ENCODE measurements at regions of chr5 and their contacts with region 1.

Region 1: GRCh38 chr5:179806250-179807222 is at the start of gene MGAT4B:
- DNase-seq: peak in 1 of 2 experiments; percentile 83
- H3K4me3 ChIP-seq: peak within 1 kb of the TSS; percentile 98
- H3K27ac ChIP-seq: peak within 1 kb of the TSS; percentile 53
- H3K4me1 ChIP-seq: peaks cover 40% of the 10 kb centered on the region
- H3K27me3 ChIP-seq: no peaks in the 10 kb centered on the region
- CTCF ChIP-seq: no peak
- total RNA-seq, gene MGAT4B: 337 and 413 TPM in 2 replicates

Region 2: DNA sequence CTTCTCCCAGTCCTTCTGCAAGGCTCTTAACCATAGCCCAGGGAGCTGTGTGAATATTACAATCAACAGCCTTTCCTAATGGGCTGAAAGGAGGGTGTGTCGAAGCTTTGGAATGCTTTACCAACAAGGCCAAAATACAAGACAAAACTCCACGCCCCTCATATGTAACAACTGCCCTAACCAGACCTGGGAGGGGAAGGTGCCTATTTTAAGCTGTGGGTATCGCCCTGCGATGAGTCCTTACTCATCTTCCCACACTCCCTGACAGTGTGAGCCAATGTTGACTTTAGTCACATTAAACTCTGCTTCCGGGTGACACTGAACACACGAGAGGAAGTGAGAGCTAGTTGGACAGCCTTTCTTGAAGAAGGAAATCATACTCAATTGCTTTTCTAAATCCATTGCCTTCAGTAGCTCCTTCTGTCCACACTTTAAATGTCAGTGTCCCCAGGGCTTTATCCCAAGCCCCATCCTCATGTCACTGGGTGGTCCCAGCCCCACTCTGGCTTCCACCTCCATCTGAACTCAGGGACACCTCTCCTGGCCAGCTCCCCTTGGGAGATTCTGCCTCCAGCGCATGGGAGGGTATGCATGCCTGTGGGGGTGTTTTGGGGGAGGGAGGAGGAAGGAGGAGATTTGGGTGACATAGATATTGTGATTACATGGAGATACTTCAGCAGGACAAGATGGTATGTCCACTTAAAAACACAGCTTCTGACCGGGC is 107.7 kb after region 1 on chr5:
- CTCF ChIA-PET with region 1: no interaction called
- POLR2A ChIA-PET with region 1: interaction called, 17 read pairs
- intact Hi-C with region 1: loop called (anchors 10 kb)
- DNase-seq: peak; percentile 78 to 98
- H3K4me3 ChIP-seq: peak overlapping the region; percentile 35; the same call in 1 of the 2 replicates
- H3K27ac ChIP-seq: peak overlapping the region; percentile 87
- H3K4me1 ChIP-seq: peaks cover 21% of the 10 kb centered on the region
- H3K27me3 ChIP-seq: no peaks in the 10 kb centered on the region
- CTCF ChIP-seq: no peak